ENCODE measurements at regions of chr16 and their contacts with region 1.

Region 1: GRCh38 chr16:84738255-84739038 is 38.6 kb downstream of the USP10 start:
- DNase-seq: peak; percentile 82
- H3K4me3 Mint-ChIP-seq: peak overlapping the region; percentile 6
- H3K27ac Mint-ChIP-seq: peak overlapping the region; percentile 63
- H3K4me1 Mint-ChIP-seq: peaks cover 48% of the 10 kb centered on the region
- H3K27me3 Mint-ChIP-seq: no peaks in the 10 kb centered on the region

Region 2: DNA sequence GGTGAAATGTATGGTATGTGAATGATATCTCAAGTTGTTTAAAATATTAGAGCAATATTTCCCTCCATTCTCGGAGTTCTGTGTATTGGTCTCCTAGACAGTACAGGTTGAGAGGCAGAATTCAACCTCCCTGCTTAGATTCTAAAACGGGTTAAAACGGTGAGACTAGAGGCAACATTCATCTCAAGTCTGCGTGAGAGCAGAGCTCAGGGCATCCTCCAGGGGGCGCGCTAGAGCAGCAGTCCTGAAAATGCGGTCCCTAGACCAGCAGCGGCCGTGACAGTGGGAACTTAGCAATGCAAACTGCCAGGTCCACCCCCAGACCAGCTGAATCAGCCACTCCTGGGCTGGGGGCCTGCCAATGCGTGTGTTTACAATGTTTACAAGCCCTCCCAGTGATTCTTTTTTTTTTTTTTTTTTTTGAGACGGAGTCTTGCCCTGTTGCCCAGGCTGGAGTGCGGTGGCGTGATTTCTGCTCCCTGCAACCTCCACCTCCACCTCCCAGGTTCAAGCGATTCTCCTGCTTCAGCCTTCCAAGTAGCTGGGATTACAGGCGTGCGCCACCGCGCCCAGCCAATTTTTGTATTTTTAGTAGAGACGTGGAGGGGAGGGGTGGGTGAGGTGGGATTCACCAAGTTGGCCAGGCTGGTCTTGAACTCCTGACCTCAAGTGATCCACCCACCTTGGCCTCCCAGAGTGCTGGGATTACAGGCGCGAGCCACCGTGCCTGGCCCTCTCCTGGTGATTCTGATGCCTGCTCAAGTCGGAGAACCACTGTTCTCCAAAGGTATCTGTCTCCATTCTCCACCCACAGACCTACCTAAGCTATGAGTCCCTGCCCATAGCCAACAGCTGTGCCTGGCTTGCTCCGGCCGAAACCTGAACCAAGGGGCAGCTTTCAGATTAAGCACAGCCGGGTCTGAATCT is 65.9 kb before region 1 on chr16:
- CTCF ChIA-PET with region 1: interaction called, 57 read pairs
- POLR2A ChIA-PET with region 1: interaction called, 3 read pairs
- intact Hi-C with region 1: no loop called
- DNase-seq: peak; percentile 88
- H3K4me3 Mint-ChIP-seq: no peak overlapping the region
- H3K27ac Mint-ChIP-seq: no peak overlapping the region
- H3K4me1 Mint-ChIP-seq: peaks cover 1% of the 10 kb centered on the region
- H3K27me3 Mint-ChIP-seq: no peaks in the 10 kb centered on the region

Region 3: DNA sequence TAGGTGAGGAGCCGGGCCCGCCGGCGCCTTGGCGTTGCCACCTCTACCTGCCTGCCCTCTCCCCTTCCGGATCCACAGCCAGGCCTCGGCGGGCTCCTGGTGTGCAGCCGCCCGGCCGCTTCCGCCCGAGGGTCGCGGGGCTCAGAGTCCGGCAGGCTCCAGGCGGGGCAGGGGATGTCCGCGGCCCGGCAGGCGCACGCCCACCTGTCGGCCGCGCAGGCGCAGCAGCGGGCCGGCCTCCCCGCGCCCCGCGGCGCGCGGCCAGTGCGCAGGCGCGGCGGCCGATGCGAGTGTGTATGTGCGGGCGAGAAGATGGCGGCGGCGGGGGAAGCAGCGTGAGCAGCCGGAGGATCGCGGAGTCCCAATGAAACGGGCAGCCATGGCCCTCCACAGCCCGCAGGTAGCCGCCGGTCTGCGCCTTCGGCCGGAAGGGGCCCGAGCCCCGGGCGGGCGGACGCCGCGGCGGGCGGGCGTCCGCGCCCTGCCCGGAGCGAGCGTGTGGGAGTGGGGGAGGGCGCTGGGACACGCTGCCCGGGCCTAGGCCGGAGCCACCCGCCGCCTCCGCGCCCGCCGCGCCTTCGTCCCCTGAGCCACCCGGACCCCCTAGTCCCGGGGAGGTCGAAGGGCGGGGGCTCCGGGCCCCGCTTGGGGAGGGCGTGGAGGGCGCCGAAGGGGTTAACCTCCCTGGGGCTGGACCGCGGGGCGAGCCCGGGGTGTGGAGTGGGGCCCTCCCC is 38.6 kb before region 1 on chr16 and contains the start of gene USP10:
- CTCF ChIA-PET with region 1: interaction called, 14 read pairs
- POLR2A ChIA-PET with region 1: interaction called, 4 read pairs
- intact Hi-C with region 1: loop called (anchors 5 kb)
- DNase-seq: peak; percentile 88
- H3K4me3 Mint-ChIP-seq: peak within 1 kb of the TSS; percentile 97
- H3K27ac Mint-ChIP-seq: peak within 1 kb of the TSS; percentile 96
- H3K4me1 Mint-ChIP-seq: peaks cover 35% of the 10 kb centered on the region
- H3K27me3 Mint-ChIP-seq: no peaks in the 10 kb centered on the region
- total RNA-seq, gene USP10: 105 to 108 TPM

Region 4: DNA sequence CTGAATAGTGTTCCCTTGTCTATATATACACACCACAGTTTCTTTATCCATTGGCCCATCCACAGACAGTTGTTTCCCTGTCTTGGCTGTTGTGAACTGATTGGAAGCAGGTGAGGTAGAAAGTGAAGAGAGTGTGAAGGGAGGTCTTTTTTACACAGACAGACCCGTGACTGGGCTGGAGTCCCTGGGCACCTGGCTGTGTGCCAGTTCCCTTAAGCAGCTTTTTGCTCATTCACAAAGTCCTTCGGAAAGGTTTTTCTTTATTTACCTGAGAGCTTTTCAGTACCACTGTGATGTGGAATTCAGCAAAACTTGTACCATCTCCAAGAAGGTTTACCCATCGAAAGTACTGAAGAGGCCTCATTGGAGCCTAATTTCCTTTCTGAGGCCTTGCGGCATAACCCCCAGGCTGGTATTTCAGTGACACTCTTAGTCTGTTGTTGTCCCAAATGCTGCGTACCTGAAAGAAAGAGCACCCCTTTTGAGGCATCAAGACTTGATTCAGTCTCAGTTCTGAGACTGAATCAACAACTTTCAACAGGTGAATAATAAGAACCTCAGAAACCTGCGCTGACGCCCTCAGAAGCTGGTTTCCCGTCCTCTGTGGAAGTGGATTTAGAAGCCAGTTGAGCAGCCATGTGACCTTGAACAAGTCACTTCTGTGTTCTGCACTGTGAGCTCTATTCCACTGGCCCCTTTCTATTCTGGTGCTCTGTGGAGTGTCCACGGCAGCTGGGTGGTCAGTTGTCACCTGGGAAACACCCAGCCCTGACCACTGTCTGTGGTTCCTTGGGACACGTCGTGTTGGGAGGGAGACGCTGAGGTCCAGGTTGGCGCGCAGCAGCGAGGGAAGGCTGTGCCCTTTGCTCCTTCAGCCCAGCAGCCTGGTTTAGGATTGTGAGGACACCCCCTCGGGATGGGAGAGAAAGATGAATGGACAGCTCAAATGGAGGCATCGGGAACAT is 27.5 kb after region 1 on chr16:
- CTCF ChIA-PET with region 1: interaction called, 15 read pairs
- POLR2A ChIA-PET with region 1: no interaction called
- intact Hi-C with region 1: no loop called
- DNase-seq: peak; percentile 65
- H3K4me3 Mint-ChIP-seq: no peak overlapping the region
- H3K27ac Mint-ChIP-seq: peak overlapping the region; percentile 65
- H3K4me1 Mint-ChIP-seq: peaks cover 58% of the 10 kb centered on the region
- H3K27me3 Mint-ChIP-seq: no peaks in the 10 kb centered on the region

Region 5: GRCh38 chr16:84952335-84953189 is 214.1 kb after region 1 on chr16:
- CTCF ChIA-PET with region 1: interaction called, 27 read pairs
- POLR2A ChIA-PET with region 1: no interaction called
- intact Hi-C with region 1: loop called (anchors 1 kb)
- DNase-seq: peak; percentile 79
- H3K4me3 Mint-ChIP-seq: no peak overlapping the region
- H3K27ac Mint-ChIP-seq: no peak overlapping the region
- H3K4me1 Mint-ChIP-seq: peaks cover 2% of the 10 kb centered on the region
- H3K27me3 Mint-ChIP-seq: no peaks in the 10 kb centered on the region